AG04450 (cell line): ENCODE measurements at regions of chr15 and their contacts with region 1.

Region 1: GRCh38 chr15:90221246-90221900 is 12.4 kb downstream of the CIB1 start:
- DNase-seq: peak; percentile 53
- H3K4me3 ChIP-seq: no peak overlapping the region
- H3K27ac ChIP-seq: peak overlapping the region; percentile 39
- H3K27me3 ChIP-seq: no peaks in the 10 kb centered on the region
- CTCF ChIP-seq: peak; percentile 90

Region 2: DNA sequence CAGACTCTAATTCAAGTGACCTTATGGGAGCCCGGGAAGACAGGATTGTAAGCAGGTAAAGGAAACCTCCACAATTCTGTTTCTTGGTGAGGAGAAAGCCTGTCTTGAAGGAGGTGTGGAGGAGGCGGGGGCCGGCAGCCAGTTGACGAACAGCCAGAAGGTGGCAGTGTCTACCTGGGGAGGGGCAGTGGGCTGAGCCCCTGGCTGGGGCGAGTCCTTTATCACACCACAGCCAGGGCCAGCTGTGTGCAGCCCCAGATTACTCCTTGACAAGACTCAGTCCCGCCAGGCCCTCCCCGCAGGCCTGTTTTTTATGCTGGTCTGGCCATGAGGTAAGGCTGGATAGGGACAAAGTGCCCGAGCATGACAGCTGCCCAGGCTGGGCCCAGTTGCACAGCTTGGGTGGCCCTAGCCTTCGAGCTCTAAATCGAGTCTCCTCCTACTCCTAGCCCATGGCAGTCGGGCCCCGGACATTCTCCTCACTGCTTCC is 78.2 kb before region 1 on chr15:
- CTCF ChIA-PET with region 1: interaction called, 22 read pairs
- POLR2A ChIA-PET with region 1: interaction called, 3 read pairs
- DNase-seq: no peak
- H3K4me3 ChIP-seq: no peak overlapping the region
- H3K27ac ChIP-seq: no peak overlapping the region
- H3K27me3 ChIP-seq: no peaks in the 10 kb centered on the region
- CTCF ChIP-seq: peak; percentile 64

Region 3: GRCh38 chr15:90161950-90162361 is 59.4 kb before region 1 on chr15:
- CTCF ChIA-PET with region 1: interaction called, 18 read pairs
- POLR2A ChIA-PET with region 1: interaction called, 6 read pairs
- DNase-seq: no peak
- H3K4me3 ChIP-seq: no peak overlapping the region
- H3K27ac ChIP-seq: no peak overlapping the region
- H3K27me3 ChIP-seq: no peaks in the 10 kb centered on the region
- CTCF ChIP-seq: no peak

Region 4: DNA sequence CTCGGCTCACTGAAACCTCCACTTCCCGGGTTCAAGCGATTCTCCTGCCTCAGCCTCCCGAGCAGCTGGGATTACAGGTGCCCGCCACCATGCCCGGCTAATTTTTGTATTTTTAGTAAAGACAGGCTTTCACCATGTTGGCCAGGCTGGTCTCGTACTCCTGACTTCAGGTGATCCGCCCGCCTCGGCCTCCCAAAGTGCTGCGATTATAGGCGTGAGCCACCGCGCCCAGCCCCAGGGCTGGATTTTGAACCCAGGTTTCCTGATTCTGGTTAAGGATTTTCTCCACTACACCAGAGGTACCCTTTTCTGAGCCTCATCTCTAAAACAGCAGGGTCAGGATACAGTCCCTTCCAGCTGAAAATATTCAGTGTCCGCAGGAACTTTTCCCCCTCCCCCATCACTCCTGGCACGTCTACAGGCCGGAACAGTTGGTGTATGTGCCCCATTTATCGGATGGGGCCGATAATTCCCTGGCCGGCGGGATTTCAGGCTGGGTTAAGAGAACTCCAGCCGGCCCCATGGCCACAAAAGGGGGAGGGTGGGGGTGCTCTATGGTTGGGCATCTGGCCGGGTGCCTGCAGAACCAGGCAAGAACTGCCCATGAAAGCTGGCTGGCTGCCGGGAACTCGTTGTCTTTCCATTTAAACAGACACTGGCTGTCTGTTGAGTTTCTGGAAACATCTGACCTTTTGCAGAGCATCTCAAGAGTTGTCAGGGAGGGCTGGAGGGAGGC is 47.1 kb before region 1 on chr15:
- CTCF ChIA-PET with region 1: no interaction called
- POLR2A ChIA-PET with region 1: no interaction called
- DNase-seq: no peak
- H3K4me3 ChIP-seq: no peak overlapping the region
- H3K27ac ChIP-seq: no peak overlapping the region
- H3K27me3 ChIP-seq: peaks cover 3% of the 10 kb centered on the region
- CTCF ChIP-seq: no peak

Region 5: GRCh38 chr15:90209591-90209990 is 11.8 kb before region 1 on chr15:
- CTCF ChIA-PET with region 1: interaction called, 17 read pairs
- POLR2A ChIA-PET with region 1: no interaction called
- DNase-seq: no peak
- H3K4me3 ChIP-seq: no peak overlapping the region
- H3K27ac ChIP-seq: no peak overlapping the region
- H3K27me3 ChIP-seq: no peaks in the 10 kb centered on the region
- CTCF ChIP-seq: no peak